PC-3 (cell line): ENCODE measurements at regions of chr10 and their contacts with region 1.

Region 1: DNA sequence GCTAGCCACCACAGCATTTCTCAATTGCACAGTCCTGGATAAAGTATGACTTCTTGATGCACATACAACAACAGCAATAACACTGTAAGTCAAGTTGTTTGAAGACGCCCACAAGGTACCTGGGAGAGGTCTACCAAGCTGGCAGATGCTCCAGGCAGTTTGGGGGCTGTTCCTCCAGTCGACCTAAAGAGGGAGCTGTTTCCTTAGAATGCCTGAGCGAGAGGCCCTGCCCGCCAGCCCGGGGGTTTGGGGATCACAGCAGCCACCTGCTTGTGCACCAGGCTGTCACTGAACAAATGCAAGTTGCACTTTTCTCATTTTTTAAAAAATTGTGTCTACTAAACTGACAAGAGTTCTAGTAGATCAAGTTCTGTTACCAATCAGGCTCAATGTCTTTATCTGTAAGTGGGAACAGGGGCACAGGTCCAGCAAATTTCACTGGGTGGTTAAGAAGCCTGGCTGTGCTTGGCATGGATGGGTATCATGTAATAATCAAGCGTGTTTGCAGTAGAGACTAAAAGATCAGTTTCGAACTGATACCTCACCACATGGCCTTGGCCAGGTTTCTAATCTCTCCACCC is 193.8 kb upstream of the ADO start:
- DNase-seq: peak; percentile 99
- ATAC-seq: peak; percentile 72
- H3K4me3 ChIP-seq: no peak overlapping the region
- H3K27ac ChIP-seq: no peak overlapping the region
- H3K4me1 ChIP-seq: peaks cover 29% of the 10 kb centered on the region
- H3K27me3 ChIP-seq: no peaks in the 10 kb centered on the region
- CTCF ChIP-seq: peak; percentile 100

Region 2: DNA sequence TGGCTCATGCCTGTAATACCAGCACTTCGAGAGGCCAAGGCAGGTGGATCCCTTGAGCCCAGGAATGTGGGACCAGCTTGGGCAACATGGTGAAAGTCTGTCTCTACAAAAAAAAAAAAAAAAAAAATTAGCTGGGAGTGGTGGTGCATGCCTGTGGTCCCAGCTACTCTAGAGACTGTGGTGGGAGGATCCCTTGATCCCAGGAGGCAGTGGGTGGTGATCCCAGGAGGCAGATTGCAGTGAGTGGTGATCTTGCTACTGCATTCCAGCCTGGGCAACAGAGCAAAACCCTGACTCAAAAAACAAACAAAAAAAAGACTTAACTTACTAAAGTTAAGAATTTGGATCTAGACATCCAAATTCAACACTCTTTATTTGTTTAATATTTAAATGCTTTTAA is 183.6 kb after region 1 on chr10:
- CTCF ChIA-PET with region 1: interaction called, 12 read pairs
- POLR2A ChIA-PET with region 1: no interaction called
- intact Hi-C with region 1: no loop called
- DNase-seq: peak; percentile 96
- ATAC-seq: peak; percentile 97
- H3K4me3 ChIP-seq: peak overlapping the region; percentile 0; the same call in 1 of the 2 replicates
- H3K27ac ChIP-seq: peak overlapping the region; percentile 2
- H3K4me1 ChIP-seq: peaks cover 14% of the 10 kb centered on the region
- H3K27me3 ChIP-seq: no peaks in the 10 kb centered on the region
- CTCF ChIP-seq: no peak

Region 3: DNA sequence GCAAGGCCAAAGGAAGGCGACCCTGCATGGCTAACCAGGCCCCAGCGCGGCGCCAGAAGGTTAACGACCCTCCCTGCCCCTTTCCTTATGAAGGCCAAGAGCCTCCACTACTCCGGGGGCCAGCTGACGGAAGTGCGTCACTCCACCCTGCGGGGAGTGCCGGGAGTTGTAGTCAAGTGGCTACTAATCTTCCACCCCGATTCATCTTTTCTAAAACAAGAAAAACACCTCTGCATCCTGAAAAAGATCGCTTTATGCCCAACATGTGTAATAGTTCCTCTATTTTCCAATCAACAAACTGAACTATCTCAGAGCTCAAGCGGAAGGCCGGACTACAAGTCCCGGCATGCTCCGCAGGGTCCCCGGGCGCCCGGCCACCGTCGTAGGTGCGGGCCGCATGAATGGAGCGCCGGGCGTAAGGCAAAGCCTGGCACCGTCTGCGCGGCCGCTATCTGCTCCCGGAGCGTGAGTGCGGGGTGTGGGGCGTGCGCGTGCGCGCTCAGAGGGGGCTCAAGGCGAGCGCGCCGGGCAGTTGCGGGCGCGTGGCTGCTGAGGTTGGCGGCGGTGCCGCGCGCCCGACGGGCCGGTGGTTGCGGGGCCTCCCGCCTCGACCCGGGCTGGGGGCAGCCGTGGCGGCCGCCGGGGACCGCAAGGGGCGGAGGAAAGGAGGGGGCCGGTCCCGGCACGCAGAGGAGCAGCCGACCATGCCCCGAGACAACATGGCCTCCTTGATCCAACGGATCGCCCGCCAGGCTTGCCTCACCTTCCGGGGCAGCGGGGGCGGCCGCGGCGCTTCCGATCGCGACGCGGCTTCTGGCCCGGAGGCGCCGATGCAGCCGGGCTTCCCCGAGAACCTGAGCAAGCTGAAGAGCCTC is 193.9 kb after region 1 on chr10 and contains the start of gene ADO:
- CTCF ChIA-PET with region 1: interaction called, 8 read pairs
- POLR2A ChIA-PET with region 1: interaction called, 3 read pairs
- intact Hi-C with region 1: loop called (anchors 1 kb)
- DNase-seq: peak; percentile 97
- ATAC-seq: peak; percentile 82
- H3K4me3 ChIP-seq: peak within 1 kb of the TSS; percentile 79
- H3K27ac ChIP-seq: peak within 1 kb of the TSS; percentile 60
- H3K4me1 ChIP-seq: peaks cover 37% of the 10 kb centered on the region
- H3K27me3 ChIP-seq: no peaks in the 10 kb centered on the region
- CTCF ChIP-seq: no peak
- total RNA-seq, gene ADO: 107 and 129 TPM in 2 replicates